Endothelial cell of umbilical vein (primary cell): ENCODE measurements at regions of chr17 and their contacts with region 1.

Region 1: GRCh38 chr17:40191237-40192208 is 14.3 kb downstream of the RAPGEFL1 start:
- DNase-seq: peak; percentile 88
- H3K4me3 ChIP-seq: peak overlapping the region; percentile 20 to 55 (median 40)
- H3K27ac ChIP-seq: no peak overlapping the region
- H3K4me1 ChIP-seq: peaks cover 4% of the 10 kb centered on the region
- H3K27me3 ChIP-seq: no peaks in the 10 kb centered on the region
- CTCF ChIP-seq: peak; percentile 73 to 90
- POLR2A ChIP-seq: no peak

Region 2: GRCh38 chr17:40179923-40180659 is 11.4 kb before region 1 on chr17:
- CTCF ChIA-PET with region 1: interaction called, 18 read pairs
- POLR2A ChIA-PET with region 1: no interaction called
- dilution Hi-C with region 1: no loop called
- intact Hi-C with region 1: no loop called
- DNase-seq: no peak
- H3K4me3 ChIP-seq: no peak overlapping the region
- H3K27ac ChIP-seq: no peak overlapping the region
- H3K4me1 ChIP-seq: peaks cover 3% of the 10 kb centered on the region
- H3K27me3 ChIP-seq: no peaks in the 10 kb centered on the region
- CTCF ChIP-seq: no peak
- POLR2A ChIP-seq: no peak